Esophagus muscularis mucosa (tissue), 4 donors: ENCODE measurements at regions of chr17 and their contacts with region 1.

Region 1: GRCh38 chr17:27455914-27456680 is at the start of gene KSR1:
- DNase-seq: no peak
- H3K4me3 ChIP-seq: peak within 1 kb of the TSS; percentile 81 to 93 (median 88)
- H3K27ac ChIP-seq: peak within 1 kb of the TSS; percentile 87 to 93 (median 89)
- H3K4me1 ChIP-seq: peaks cover 23 to 40% (median 32%) of the 10 kb centered on the region in 4 donors
- H3K27me3 ChIP-seq: no peaks in the 10 kb centered on the region
- CTCF ChIP-seq: peak in 2 of 3 experiments; percentile 30 to 34
- EP300 ChIP-seq: no peak
- POLR2A ChIP-seq: no peak
- total RNA-seq, gene KSR1: 13.3 to 18.9 (median 13.7) TPM

Region 2: GRCh38 chr17:27038676-27039075 is 417.4 kb before region 1 on chr17:
- intact Hi-C with region 1: no loop called
- DNase-seq: no peak
- H3K4me3 ChIP-seq: no peak overlapping the region
- H3K27ac ChIP-seq: no peak overlapping the region
- H3K4me1 ChIP-seq: no peaks in the 10 kb centered on the region
- H3K27me3 ChIP-seq: no peaks in the 10 kb centered on the region
- CTCF ChIP-seq: no peak
- EP300 ChIP-seq: no peak
- POLR2A ChIP-seq: no peak

Region 3: GRCh38 chr17:27236717-27237315 is 219.3 kb before region 1 on chr17:
- intact Hi-C with region 1: loop called (anchors 10 kb)
- DNase-seq: no peak
- H3K4me3 ChIP-seq: no peak overlapping the region
- H3K27ac ChIP-seq: no peak overlapping the region
- H3K4me1 ChIP-seq: peaks cover 0 to 33% (median 11%) of the 10 kb centered on the region in 4 donors
- H3K27me3 ChIP-seq: no peaks in the 10 kb centered on the region
- CTCF ChIP-seq: peak; percentile 91 to 95 (median 94)
- EP300 ChIP-seq: no peak
- POLR2A ChIP-seq: no peak

Region 4: DNA sequence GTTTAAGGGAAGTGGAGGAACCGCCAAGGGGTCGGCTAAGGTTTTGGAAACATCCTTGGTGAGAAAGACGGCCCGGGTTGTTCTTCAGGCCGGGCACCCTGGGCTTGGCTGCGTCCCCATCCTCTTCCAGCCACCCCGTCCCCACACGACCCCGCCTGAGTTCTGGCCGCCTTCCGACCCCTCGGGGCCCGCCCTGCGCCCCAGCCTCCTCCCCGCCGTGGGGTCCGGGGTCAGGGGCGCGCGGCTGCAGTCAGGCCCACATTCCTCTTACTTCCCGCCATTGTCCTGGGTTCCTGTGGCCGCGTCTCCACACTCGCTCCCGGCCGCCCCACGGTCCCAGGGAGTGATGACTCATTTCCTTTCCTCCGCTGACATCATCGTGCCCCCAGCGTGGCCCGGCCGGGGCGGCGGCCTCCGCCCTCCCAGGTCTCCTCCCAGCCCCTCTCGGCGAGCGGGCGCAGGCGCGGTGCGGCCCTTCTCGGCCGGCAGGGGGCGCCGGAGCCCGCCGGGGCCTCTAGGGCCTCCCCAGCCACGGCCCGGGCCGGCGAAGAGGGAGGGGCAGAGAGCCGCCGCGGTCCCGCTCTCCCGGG is 102.5 kb before region 1 on chr17:
- intact Hi-C with region 1: loop called (anchors 5 kb)
- DNase-seq: peak; percentile 97
- H3K4me3 ChIP-seq: peak overlapping the region; percentile 66 to 77 (median 71)
- H3K27ac ChIP-seq: peak overlapping the region; percentile 90 to 97 (median 94)
- H3K4me1 ChIP-seq: peaks cover 23 to 32% (median 28%) of the 10 kb centered on the region in 4 donors
- H3K27me3 ChIP-seq: no peaks in the 10 kb centered on the region
- CTCF ChIP-seq: peak in 2 of 3 experiments; percentile 99
- EP300 ChIP-seq: no peak
- POLR2A ChIP-seq: peak; percentile 70

Region 5: GRCh38 chr17:27559506-27560481 is 103.7 kb after region 1 on chr17:
- intact Hi-C with region 1: loop called (anchors 5 kb)
- DNase-seq: no peak
- H3K4me3 ChIP-seq: peak overlapping the region; percentile 22 to 45 (median 28)
- H3K27ac ChIP-seq: peak overlapping the region; percentile 49 to 64 (median 52)
- H3K4me1 ChIP-seq: peaks cover 26 to 31% (median 30%) of the 10 kb centered on the region in 4 donors
- H3K27me3 ChIP-seq: no peaks in the 10 kb centered on the region
- CTCF ChIP-seq: peak in 1 of 3 experiments; percentile 8
- EP300 ChIP-seq: no peak
- POLR2A ChIP-seq: no peak